Aorta (tissue), 5 donors: ENCODE measurements at regions of chr4 and their contacts with region 1.

Region 1: GRCh38 chr4:185395956-185396723 is 416 bp upstream of the LRP2BP start:
- DNase-seq: peak; percentile 98
- ATAC-seq: peak; percentile 98
- H3K4me3 ChIP-seq: peak overlapping the region; percentile 71 to 76
- H3K27ac ChIP-seq: peak overlapping the region; percentile 89 to 98
- H3K4me1 ChIP-seq: no peaks in the 10 kb centered on the region
- H3K27me3 ChIP-seq: no peaks in the 10 kb centered on the region

Region 2: DNA sequence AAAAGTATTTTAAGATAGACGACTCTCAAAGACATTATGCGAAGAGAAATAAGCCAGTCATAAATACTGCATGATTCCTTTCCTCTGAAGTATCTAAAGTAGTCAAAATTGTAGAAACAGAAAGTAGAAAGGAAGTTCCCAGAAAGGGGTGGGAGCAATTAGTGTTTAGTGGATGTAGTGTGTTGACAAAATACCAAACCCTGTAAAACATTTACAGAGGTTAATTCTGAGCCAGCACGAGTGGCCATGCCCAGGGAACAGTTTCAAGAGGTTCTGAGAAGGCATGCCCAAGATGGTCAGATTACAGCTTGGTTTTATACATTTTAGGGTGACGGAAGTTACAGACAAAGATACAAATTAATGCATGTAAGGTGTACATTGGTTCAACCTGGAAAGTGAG is 287.5 kb before region 1 on chr4:
- intact Hi-C with region 1: no loop called
- DNase-seq: no peak
- ATAC-seq: no peak
- H3K4me3 ChIP-seq: no peak overlapping the region
- H3K27ac ChIP-seq: no peak overlapping the region
- H3K4me1 ChIP-seq: peaks cover 0 to 3% of the 10 kb centered on the region in 2 donors
- H3K27me3 ChIP-seq: no peaks in the 10 kb centered on the region

Region 3: GRCh38 chr4:185203486-185204237 is 192.5 kb before region 1 on chr4 and contains the start of gene CFAP97:
- intact Hi-C with region 1: loop called in 1 of 2 experiments (anchors 10 kb)
- DNase-seq: peak; percentile 95 to 99
- ATAC-seq: peak; percentile 95
- H3K4me3 ChIP-seq: peak within 1 kb of the TSS; percentile 70 to 85
- H3K27ac ChIP-seq: peak within 1 kb of the TSS; percentile 85 to 91
- H3K4me1 ChIP-seq: peaks cover 0 to 2% of the 10 kb centered on the region in 2 donors
- H3K27me3 ChIP-seq: no peaks in the 10 kb centered on the region
- total RNA-seq, gene CFAP97: 49.8 to 58.4 TPM

Region 4: GRCh38 chr4:185209031-185209851 is 186.9 kb before region 1 on chr4 and contains the start of gene SNX25:
- intact Hi-C with region 1: loop called (anchors 2 to 10 kb)
- DNase-seq: peak; percentile 91 to 95
- ATAC-seq: peak; percentile 95
- H3K4me3 ChIP-seq: peak within 1 kb of the TSS; percentile 94 to 96
- H3K27ac ChIP-seq: peak within 1 kb of the TSS; percentile 90 to 96
- H3K4me1 ChIP-seq: peaks cover 2 to 4% of the 10 kb centered on the region in 2 donors
- H3K27me3 ChIP-seq: no peaks in the 10 kb centered on the region
- total RNA-seq, gene SNX25: 36.2 to 44.7 TPM

Region 5: GRCh38 chr4:185358514-185358913 is 37.6 kb before region 1 on chr4:
- intact Hi-C with region 1: loop called (anchors 2 to 5 kb)
- DNase-seq: peak in 1 of 2 donors; percentile 59
- ATAC-seq: peak; percentile 57
- H3K4me3 ChIP-seq: no peak overlapping the region
- H3K27ac ChIP-seq: peak overlapping the region; percentile 80 to 93
- H3K4me1 ChIP-seq: peaks cover 6 to 7% of the 10 kb centered on the region in 2 donors
- H3K27me3 ChIP-seq: no peaks in the 10 kb centered on the region

Region 6: DNA sequence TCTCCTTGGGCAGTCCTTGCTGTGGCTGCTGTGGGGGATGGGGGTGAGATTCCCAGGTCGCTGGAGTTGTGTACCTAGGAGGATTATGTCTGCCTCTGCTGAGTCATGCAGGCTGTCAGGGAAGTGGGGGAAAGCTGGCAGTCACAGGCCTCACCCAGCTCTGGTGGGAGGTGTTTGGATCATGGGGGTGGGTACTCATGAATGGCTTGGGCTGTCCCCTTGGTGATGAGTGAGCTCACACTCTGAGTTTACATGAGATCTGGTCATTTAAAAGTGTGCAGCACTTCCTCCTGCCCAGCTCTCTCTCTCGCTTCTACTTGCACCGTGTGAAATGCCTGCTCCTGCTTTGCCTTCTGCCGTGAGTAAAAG is 163.8 kb after region 1 on chr4:
- intact Hi-C with region 1: no loop called
- DNase-seq: peak; percentile 83 to 84
- ATAC-seq: peak; percentile 84
- H3K4me3 ChIP-seq: no peak overlapping the region
- H3K27ac ChIP-seq: peak overlapping the region in 1 of 2 donors; percentile 64
- H3K4me1 ChIP-seq: peaks cover 0 to 4% of the 10 kb centered on the region in 2 donors
- H3K27me3 ChIP-seq: no peaks in the 10 kb centered on the region

Region 7: DNA sequence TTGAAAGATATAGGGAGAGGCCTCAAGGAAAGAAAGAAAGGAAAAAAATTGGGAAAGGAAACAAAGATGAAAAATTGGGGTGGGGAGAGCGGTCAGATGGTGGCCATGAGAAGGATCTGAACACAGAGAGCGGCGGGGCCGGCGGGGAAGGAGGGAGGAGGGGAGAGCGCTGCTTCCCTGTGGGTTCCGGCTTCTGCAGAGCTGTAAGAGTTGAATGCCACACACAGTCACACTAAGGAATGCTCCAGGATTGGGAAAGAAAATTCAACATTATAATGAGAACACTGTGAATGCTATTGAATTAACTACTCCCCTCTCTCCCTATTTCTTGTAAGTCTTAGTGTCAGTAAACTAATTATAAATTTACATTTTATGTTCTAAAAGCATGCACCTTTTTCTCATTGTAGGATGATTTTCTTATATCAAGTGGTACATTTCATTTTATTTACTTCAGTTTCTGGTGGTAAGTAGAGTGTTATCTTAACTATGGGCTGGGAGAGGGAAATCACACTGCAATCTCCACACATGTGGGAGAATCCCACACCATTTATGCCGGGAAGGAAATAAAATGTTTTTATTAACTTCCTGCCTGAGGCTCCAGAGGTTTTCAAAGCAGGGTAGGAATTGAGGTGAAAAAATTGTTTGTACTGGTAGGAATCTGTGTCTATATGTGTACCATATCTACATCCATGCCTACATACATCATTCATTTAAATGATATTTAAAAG is 870.8 kb after region 1 on chr4:
- intact Hi-C with region 1: no loop called
- DNase-seq: no peak
- ATAC-seq: no peak
- H3K4me3 ChIP-seq: no peak overlapping the region
- H3K27ac ChIP-seq: no peak overlapping the region
- H3K4me1 ChIP-seq: no peaks in the 10 kb centered on the region
- H3K27me3 ChIP-seq: no peaks in the 10 kb centered on the region